ENCODE measurements at regions of chr2 and their contacts with region 1.

Region 1: GRCh38 chr2:168346725-168347477 is 99.5 kb upstream of the STK39 start:
- DNase-seq: peak; percentile 79
- H3K4me3 ChIP-seq: peak overlapping the region; percentile 14 to 64 (median 24)
- H3K27ac ChIP-seq: no peak overlapping the region
- H3K4me1 ChIP-seq: peaks cover 0 to 25% (median 5%) of the 10 kb centered on the region in 6 donors
- H3K27me3 ChIP-seq: peaks cover 0 to 11% (median 0%) of the 10 kb centered on the region in 7 donors
- CTCF ChIP-seq: peak; percentile 66 to 88 (median 83)
- POLR2A ChIP-seq: no peak

Region 2: GRCh38 chr2:168392024-168392423 is 45.1 kb after region 1 on chr2:
- intact Hi-C with region 1: no loop called
- DNase-seq: no peak
- H3K4me3 ChIP-seq: no peak overlapping the region
- H3K27ac ChIP-seq: no peak overlapping the region
- H3K4me1 ChIP-seq: no peaks in the 10 kb centered on the region
- H3K27me3 ChIP-seq: no peaks in the 10 kb centered on the region
- CTCF ChIP-seq: no peak
- POLR2A ChIP-seq: no peak

Region 3: GRCh38 chr2:168573128-168573903 is 226.4 kb after region 1 on chr2:
- intact Hi-C with region 1: no loop called
- DNase-seq: no peak
- H3K4me3 ChIP-seq: no peak overlapping the region
- H3K27ac ChIP-seq: no peak overlapping the region
- H3K4me1 ChIP-seq: peaks cover 0 to 17% (median 0%) of the 10 kb centered on the region in 6 donors
- H3K27me3 ChIP-seq: no peaks in the 10 kb centered on the region
- CTCF ChIP-seq: no peak
- POLR2A ChIP-seq: no peak

Region 4: GRCh38 chr2:168758970-168759820 is 412.3 kb after region 1 on chr2:
- intact Hi-C with region 1: loop called (anchors 5 kb)
- DNase-seq: no peak
- H3K4me3 ChIP-seq: no peak overlapping the region
- H3K27ac ChIP-seq: no peak overlapping the region
- H3K4me1 ChIP-seq: peaks cover 0 to 21% (median 14%) of the 10 kb centered on the region in 6 donors
- H3K27me3 ChIP-seq: peaks cover 0 to 8% (median 0%) of the 10 kb centered on the region in 7 donors
- CTCF ChIP-seq: peak in 9 of 11 experiments; percentile 24 to 64 (median 52)
- POLR2A ChIP-seq: no peak